ENCODE measurements at regions of chr2 and their contacts with region 1.

Region 1: DNA sequence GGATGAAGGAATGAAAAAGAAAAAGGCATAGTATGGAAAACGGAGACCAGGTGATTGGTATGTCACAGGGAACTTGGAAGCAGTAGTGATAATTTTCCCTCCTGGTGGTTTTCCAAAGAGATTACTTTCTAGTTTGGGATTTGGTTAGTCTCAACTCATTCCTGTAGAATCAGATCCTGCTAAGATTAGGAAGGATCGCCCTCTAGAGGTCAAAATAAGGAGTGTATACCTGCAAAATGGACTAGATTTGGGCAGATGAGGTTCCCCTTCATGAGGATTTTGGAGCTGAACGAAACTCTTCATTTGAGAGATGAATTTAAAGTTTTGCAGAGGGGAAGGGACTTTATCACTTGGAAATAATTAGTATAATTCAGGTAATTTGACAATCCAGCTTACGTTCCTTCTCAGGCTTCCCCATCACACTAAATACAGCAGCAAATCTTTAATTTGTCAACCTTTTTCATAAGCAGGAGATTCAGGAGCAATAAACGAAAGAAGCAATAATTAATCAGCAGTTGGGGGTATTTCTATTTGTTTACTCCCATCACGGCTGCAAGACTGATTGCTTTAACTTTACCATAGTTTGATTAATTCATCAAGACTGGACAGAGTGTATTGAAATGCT is 65.2 kb downstream of the CCDC195 start:
- DNase-seq: no peak
- ATAC-seq: peak; percentile 47 to 72
- H3K4me3 ChIP-seq: no peak overlapping the region
- H3K27ac ChIP-seq: no peak overlapping the region
- H3K4me1 ChIP-seq: no peaks in the 10 kb centered on the region
- H3K27me3 ChIP-seq: no peaks in the 10 kb centered on the region

Region 2: DNA sequence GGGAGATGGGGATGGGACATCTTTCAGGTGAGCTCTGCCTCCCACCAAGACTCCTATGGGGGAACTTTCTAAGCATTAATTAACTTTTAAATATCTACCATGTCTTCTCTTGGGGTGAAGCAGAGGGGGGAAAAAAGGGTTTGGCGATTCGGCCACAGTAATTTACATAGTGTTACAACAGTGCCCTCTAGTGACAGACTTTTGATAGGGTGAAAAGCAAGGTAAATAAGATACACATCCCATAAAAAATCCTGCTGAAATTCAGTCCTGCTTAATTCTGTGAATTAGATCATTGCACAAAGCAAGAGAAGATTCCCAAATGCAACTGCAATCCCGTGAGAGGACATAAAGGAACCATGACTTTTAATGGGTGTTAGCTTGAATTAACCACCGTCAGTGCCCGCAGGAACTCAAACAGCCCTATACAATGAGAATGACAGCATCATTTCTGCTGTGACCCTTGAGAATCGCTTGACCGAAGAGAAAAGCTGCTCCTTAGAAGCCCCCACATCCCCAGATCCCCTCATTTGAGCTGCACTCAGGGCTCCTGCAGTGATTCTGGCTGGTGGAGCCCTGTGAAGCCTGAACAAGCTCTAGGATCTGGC is 281.8 kb before region 1 on chr2:
- intact Hi-C with region 1: loop called in 1 of 4 experiments (anchors 5 kb)
- DNase-seq: no peak
- ATAC-seq: no peak
- H3K4me3 ChIP-seq: no peak overlapping the region
- H3K27ac ChIP-seq: no peak overlapping the region
- H3K4me1 ChIP-seq: no peaks in the 10 kb centered on the region
- H3K27me3 ChIP-seq: no peaks in the 10 kb centered on the region

Region 3: GRCh38 chr2:224778474-224778877 is 127.5 kb after region 1 on chr2:
- intact Hi-C with region 1: loop called in 1 of 4 experiments (anchors 10 kb)
- DNase-seq: peak in 1 of 3 donors; percentile 33
- ATAC-seq: peak in 1 of 2 donors; percentile 34
- H3K4me3 ChIP-seq: no peak overlapping the region
- H3K27ac ChIP-seq: no peak overlapping the region
- H3K4me1 ChIP-seq: no peaks in the 10 kb centered on the region
- H3K27me3 ChIP-seq: no peaks in the 10 kb centered on the region